ENCODE measurements at regions of chr17 and their contacts with region 1.

Region 1: GRCh38 chr17:21214015-21214776 is at the start of gene TMEM11:
- DNase-seq: peak; percentile 95
- H3K4me3 Mint-ChIP-seq: peak within 1 kb of the TSS; percentile 97
- H3K27ac Mint-ChIP-seq: peak within 1 kb of the TSS; percentile 91
- H3K4me1 Mint-ChIP-seq: peaks cover 55% of the 10 kb centered on the region
- H3K27me3 Mint-ChIP-seq: no peaks in the 10 kb centered on the region
- total RNA-seq, gene TMEM11: 33.5 and 35.6 TPM in 2 replicates

Region 2: GRCh38 chr17:21098934-21099689 is 115.1 kb before region 1 on chr17:
- intact Hi-C with region 1: loop called (anchors 1 kb)
- DNase-seq: peak; percentile 68
- H3K4me3 Mint-ChIP-seq: peak overlapping the region; percentile 92
- H3K27ac Mint-ChIP-seq: peak overlapping the region; percentile 88
- H3K4me1 Mint-ChIP-seq: peaks cover 27% of the 10 kb centered on the region
- H3K27me3 Mint-ChIP-seq: no peaks in the 10 kb centered on the region

Region 3: DNA sequence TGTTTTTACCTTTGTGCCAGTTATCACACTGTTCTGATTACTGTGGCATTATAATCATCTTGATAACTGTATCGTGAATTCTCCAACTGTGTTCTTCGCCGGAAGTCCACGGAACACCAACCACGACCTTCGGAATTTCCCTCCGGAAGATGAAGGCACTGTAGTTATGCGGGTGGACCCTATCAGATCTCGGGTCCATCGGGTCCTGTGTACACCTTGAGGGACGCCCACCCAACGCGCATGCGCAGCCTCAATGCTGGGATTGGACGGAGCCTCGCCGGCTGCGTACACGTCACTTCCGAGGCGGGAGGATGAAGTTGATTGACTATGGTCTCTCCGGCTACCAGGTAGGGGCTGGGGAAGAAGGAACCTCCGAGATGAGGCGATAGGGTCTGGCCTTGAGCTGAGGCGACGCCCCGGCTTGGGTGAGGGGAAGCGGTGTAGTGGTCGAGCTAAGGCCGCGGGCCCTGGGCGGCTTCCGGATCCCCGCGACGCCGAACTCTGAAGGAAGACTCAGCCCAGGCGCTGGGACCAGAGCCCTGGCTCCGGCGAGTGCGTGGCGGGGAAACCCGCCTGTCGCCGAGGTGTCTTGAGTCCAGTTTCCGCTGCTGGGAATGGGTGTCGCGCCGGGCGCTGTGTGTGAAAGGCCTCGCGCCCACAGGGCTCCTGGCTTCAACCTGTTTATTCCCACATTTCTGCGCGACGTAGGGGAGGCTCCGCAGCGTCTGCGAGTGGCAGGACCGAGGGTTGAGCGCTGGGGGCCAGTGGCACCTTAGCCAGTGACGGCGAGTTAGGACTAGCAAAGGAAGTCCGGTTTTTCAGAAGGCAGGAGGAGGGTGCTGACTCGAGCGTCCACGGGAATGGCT is 87.3 kb before region 1 on chr17 and contains the start of gene DHRS7B:
- intact Hi-C with region 1: loop called (anchors 1 kb)
- DNase-seq: peak; percentile 96
- H3K4me3 Mint-ChIP-seq: peak within 1 kb of the TSS; percentile 95
- H3K27ac Mint-ChIP-seq: peak within 1 kb of the TSS; percentile 95
- H3K4me1 Mint-ChIP-seq: peaks cover 44% of the 10 kb centered on the region
- H3K27me3 Mint-ChIP-seq: peaks cover 3% of the 10 kb centered on the region
- total RNA-seq, gene DHRS7B: 20.0 and 23.6 TPM in 2 replicates

Region 4: DNA sequence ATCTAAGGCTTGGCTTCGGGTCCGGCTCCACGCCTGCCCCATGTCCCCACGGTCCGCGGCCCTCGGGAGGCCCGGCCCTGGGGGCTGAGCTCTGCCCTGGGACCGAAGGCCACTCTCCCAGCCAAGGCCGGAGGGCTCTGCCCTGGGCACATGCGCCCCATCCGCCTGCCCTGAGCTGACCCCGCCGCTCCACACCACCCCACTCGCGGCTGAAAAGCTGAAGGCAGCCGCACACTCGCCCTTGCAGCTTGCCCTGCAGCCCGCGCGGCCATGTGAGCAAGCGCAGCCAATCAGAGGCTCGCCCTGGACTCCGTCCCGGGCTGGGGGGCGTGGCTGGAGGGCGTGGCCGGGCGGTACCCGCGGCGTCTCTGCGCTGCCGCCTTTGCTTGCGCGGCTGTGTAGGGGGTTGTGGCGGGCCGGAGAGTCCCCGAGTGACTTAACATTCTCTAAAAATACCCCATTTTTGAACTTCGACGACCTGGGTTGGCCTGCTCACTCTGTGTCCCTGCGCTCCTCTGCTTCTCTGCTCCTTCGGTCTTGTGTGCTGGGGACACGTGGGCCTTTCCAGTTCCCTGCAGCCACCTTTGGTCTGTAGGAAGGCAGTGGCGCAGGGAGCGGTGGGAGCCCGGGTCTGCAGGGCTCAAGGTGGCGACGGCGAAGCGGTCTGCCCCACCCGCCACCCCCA is 61.5 kb after region 1 on chr17:
- intact Hi-C with region 1: loop called (anchors 1 kb)
- DNase-seq: peak; percentile 92
- H3K4me3 Mint-ChIP-seq: peak overlapping the region; percentile 95
- H3K27ac Mint-ChIP-seq: peak overlapping the region; percentile 63
- H3K4me1 Mint-ChIP-seq: peaks cover 43% of the 10 kb centered on the region
- H3K27me3 Mint-ChIP-seq: peaks cover 3% of the 10 kb centered on the region

Region 5: GRCh38 chr17:21358707-21359482 is 144.7 kb after region 1 on chr17:
- intact Hi-C with region 1: no loop called
- DNase-seq: no peak
- H3K4me3 Mint-ChIP-seq: no peak overlapping the region
- H3K27ac Mint-ChIP-seq: no peak overlapping the region
- H3K4me1 Mint-ChIP-seq: no peaks in the 10 kb centered on the region
- H3K27me3 Mint-ChIP-seq: no peaks in the 10 kb centered on the region

Region 6: DNA sequence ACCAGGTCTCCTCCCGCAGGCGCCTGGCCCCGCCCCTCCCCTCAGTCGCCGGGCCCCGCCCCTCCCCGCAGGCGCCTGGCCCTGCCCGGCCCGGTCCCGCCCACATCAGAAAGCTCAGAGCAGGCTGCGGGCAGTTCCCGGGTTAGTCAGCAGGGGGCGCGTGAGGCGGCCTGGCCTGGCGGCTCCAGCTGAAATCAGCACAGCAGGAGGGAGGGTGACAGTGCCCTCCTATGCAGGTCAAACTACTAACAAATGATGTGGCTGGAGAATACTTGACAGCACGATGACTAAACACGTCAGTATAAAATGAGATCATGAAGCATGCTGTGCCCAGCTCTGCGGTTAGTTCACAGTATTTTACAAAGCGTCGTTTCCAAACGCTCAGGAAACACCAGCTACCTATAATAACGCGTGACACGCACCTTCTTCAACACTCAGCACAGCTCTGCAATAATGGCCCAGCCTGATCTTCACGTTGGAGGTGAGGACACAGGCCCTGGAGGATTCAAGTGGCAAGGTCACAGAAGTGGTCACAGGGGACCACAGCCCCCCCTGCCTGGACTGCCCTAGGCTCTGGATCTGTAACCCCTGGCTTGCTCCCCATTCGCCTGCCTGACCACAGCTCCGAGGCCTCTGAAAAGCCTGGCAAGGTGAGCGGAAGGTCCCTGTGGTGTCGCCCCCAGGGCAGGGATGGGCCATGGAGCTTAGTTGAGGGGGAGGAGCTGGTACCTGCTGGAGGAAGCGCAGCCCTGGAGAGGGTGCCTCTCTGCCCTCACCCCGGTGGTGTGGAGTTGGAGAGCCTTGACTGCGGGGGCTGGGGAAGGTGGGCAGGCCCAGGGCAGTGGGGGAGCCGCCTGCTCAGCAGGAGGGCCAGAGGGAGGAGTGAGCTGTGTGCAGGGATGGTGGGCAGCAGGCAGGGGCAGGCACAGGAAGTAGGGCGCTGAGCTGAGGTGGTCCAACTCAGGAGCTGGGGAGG is 243.1 kb after region 1 on chr17:
- intact Hi-C with region 1: loop called (anchors 1 kb)
- DNase-seq: peak; percentile 85
- H3K4me3 Mint-ChIP-seq: no peak overlapping the region
- H3K27ac Mint-ChIP-seq: peak overlapping the region; percentile 64
- H3K4me1 Mint-ChIP-seq: peaks cover 10% of the 10 kb centered on the region
- H3K27me3 Mint-ChIP-seq: peaks cover 25% of the 10 kb centered on the region

Region 7: DNA sequence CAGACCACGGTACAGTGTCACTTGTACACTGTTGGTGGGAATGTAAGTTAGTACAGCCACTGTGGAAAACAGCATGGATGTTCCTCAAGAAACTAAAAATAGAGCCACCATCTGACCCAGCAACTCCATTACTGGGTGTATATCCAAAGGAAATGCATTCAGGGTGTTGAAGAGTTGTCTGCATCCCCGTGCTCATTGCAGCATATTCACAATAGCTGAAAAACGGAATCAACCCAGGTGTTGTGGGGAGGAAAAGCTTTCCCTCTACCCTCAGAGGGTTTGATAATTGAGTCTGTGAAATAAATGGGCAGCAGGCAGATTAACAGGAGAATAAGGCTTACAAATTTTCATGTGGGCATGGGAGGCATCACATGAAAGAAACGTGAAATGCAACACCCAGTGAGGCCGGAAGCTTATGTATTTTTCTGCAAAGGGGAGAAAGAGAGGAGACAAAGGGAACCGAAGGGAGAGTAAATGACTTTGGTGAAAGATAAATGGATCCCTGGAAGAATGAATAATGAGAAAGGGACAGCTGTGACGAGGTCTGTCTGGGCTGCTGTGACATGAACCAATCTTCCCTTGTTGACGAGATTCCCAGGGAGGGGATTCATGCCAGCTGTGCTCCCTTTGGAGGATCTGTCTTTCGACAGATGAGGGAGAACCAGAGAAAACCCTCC is 268.1 kb after region 1 on chr17:
- intact Hi-C with region 1: no loop called
- DNase-seq: no peak
- H3K4me3 Mint-ChIP-seq: no peak overlapping the region
- H3K27ac Mint-ChIP-seq: no peak overlapping the region
- H3K4me1 Mint-ChIP-seq: no peaks in the 10 kb centered on the region
- H3K27me3 Mint-ChIP-seq: peaks cover 24% of the 10 kb centered on the region

Measured in activated T-helper 1 cell treated with anti-CD3 and anti-CD28 coated beads, Interleukin-12 subunit alpha, Interleukin-12 subunit beta, Interleukin-2, Interleukin-4 antibody, amounts not matched to agents 30 ng/mL and 10 ng/mL and 1 ng/mL, durations not matched to agents 14 hours and 24 hours and 36 hours (primary cell).